IMR-90 (cell line): ENCODE measurements at regions of chr10 and their contacts with region 1.

Region 1: GRCh38 chr10:18539335-18539734 is 112.1 kb downstream of the NSUN6 start:
- DNase-seq: no peak
- ATAC-seq: no peak
- H3K4me3 ChIP-seq: no peak overlapping the region
- H3K27ac ChIP-seq: no peak overlapping the region
- H3K4me1 ChIP-seq: peaks cover 4% of the 10 kb centered on the region
- H3K27me3 ChIP-seq: no peaks in the 10 kb centered on the region
- CTCF ChIP-seq: no peak
- POLR2A ChIP-seq: no peak
- RAD21 ChIP-seq: no peak

Region 2: GRCh38 chr10:18583575-18584270 is 44.4 kb after region 1 on chr10:
- CTCF ChIA-PET with region 1: no interaction called
- POLR2A ChIA-PET with region 1: no interaction called
- dilution Hi-C with region 1: no loop called
- in situ Hi-C with region 1: loop called (anchors 5 kb)
- intact Hi-C with region 1: no loop called
- DNase-seq: no peak
- ATAC-seq: no peak
- H3K4me3 ChIP-seq: no peak overlapping the region
- H3K27ac ChIP-seq: no peak overlapping the region
- H3K4me1 ChIP-seq: peaks cover 2% of the 10 kb centered on the region; the same call in 1 of the 2 replicates
- H3K27me3 ChIP-seq: no peaks in the 10 kb centered on the region
- CTCF ChIP-seq: peak; percentile 26; the same call in 1 of the 2 replicates
- POLR2A ChIP-seq: no peak
- RAD21 ChIP-seq: no peak